K562 (cell line): ENCODE measurements at regions of chr9 and their contacts with region 1.

Region 1: DNA sequence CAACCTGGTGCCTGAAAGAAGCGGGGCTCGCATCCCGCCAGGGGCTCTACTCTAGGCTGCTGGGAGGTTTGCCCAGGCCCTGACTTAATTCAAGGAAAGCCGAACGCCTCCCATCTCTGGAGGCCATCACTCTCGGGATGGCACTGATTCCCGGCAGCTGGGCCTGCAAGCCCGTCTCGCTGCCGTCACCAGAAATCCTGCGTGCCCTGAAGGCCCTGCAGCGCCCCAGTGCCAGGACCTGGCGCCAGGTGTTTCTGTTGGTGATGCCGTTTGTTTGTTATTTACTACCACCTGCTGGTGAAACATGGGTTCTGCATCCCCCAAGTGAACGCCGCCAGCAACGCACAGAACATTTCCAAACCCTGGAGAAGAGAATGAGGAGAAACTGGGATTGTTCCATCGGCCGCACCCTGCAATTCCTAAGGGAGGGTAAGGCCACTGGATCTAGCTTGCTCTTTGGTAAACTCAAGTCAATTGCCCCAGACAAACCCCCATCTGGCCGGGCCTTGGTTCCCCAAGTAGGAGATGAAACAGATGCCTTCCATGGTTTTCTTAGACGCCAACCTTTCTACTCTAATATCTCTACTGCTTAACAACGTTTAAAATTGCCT is 77.9 kb downstream of the AK8 start:
- DNase-seq: peak; percentile 56 to 71 (median 66)
- ATAC-seq: peak; percentile 70
- H3K4me3 ChIP-seq: no peak overlapping the region
- H3K27ac ChIP-seq: no peak overlapping the region
- H3K4me1 ChIP-seq: peaks cover 15 to 29% of the 10 kb centered on the region in 2 experiments
- H3K27me3 ChIP-seq: peaks cover 9 to 34% of the 10 kb centered on the region in 2 experiments; a peak in 4 of 5 replicates
- CTCF ChIP-seq: peak; percentile 88 to 89 (median 88)
- EP300 ChIP-seq: no peak
- POLR2A ChIP-seq: no peak
- RAD21 ChIP-seq: peak; percentile 87 to 93

Region 2: DNA sequence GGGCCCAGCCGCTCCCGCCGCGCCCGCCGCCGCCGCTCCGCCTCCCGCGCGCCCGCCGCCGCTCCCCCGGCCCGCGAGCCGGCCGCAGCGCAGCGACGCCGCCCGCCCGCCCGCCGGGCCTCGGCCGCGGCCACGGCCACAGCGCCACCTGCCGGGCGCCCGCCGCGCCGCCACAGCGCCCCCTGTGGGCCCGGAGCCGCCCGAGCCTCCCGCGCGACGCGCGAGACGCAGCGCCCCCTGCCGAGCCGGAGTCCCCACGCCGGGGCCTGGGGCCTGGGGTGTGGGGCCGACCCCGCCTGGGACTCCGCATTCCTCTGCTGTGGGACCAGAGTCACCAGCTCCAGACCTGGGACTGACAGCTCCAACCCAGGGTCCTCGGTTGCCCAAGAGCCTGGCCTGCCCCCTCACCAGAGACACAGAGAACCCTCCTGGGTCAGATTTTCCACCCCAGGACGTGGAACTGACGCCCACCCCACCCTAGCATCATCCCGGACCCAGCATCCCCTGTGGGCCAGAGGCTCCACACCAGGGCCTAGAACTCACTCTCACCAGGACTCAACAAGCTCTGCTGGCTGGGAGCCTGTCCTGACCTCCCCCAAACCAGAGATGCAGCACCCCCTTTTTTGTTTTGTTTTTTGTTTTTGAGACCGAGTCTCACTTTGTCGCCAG is 1060.0 kb before region 1 on chr9 and contains the start of gene RAPGEF1:
- CTCF ChIA-PET with region 1: no interaction called
- POLR2A ChIA-PET with region 1: no interaction called
- in situ Hi-C with region 1: no loop called
- intact Hi-C with region 1: no loop called
- DNase-seq: peak; percentile 75 to 92 (median 88)
- ATAC-seq: peak; percentile 89
- H3K4me3 ChIP-seq: peak within 1 kb of the TSS; percentile 64
- H3K27ac ChIP-seq: peak within 1 kb of the TSS; percentile 51; the same call in 1 of the 3 replicates
- H3K4me1 ChIP-seq: peaks cover 11 to 31% of the 10 kb centered on the region in 2 experiments; a peak in 4 of 5 replicates
- H3K27me3 ChIP-seq: no peaks in the 10 kb centered on the region
- CTCF ChIP-seq: peak; percentile 62 to 99 (median 98)
- EP300 ChIP-seq: no peak; the same call in 1 of the 2 replicates
- POLR2A ChIP-seq: no peak
- RAD21 ChIP-seq: peak; percentile 57 to 90
- polyA plus RNA-seq, gene RAPGEF1: 0.06 to 0.10 TPM

Region 3: GRCh38 chr9:132411091-132411508 is 389.0 kb before region 1 on chr9:
- CTCF ChIA-PET with region 1: interaction called, 33 read pairs
- POLR2A ChIA-PET with region 1: interaction called, 5 read pairs
- in situ Hi-C with region 1: no loop called
- intact Hi-C with region 1: loop called (anchors 1 kb)
- DNase-seq: peak; percentile 71 to 77 (median 76)
- ATAC-seq: peak; percentile 87
- H3K4me3 ChIP-seq: no peak overlapping the region
- H3K27ac ChIP-seq: no peak overlapping the region
- H3K4me1 ChIP-seq: peaks cover 13 to 17% of the 10 kb centered on the region in 2 experiments; a peak in 4 of 5 replicates
- H3K27me3 ChIP-seq: peaks cover 23 to 31% of the 10 kb centered on the region in 2 experiments
- CTCF ChIP-seq: peak; percentile 85 to 93 (median 86)
- EP300 ChIP-seq: no peak
- POLR2A ChIP-seq: no peak
- RAD21 ChIP-seq: peak; percentile 75 to 86

Region 4: GRCh38 chr9:132507746-132508469 is 292.2 kb before region 1 on chr9:
- CTCF ChIA-PET with region 1: interaction called, 30 read pairs
- POLR2A ChIA-PET with region 1: no interaction called
- in situ Hi-C with region 1: no loop called
- intact Hi-C with region 1: loop called (anchors 1 kb)
- DNase-seq: peak; percentile 79 to 87 (median 82)
- ATAC-seq: peak; percentile 93
- H3K4me3 ChIP-seq: no peak overlapping the region
- H3K27ac ChIP-seq: no peak overlapping the region
- H3K4me1 ChIP-seq: peaks cover 0 to 6% of the 10 kb centered on the region in 2 experiments; a peak in 1 of 5 replicates
- H3K27me3 ChIP-seq: peaks cover 60 to 89% of the 10 kb centered on the region in 2 experiments
- CTCF ChIP-seq: peak; percentile 81 to 88 (median 88)
- EP300 ChIP-seq: no peak
- POLR2A ChIP-seq: no peak
- RAD21 ChIP-seq: peak; percentile 71 to 84

Region 5: GRCh38 chr9:132669698-132670456 is 130.3 kb before region 1 on chr9 and contains the start of gene DDX31:
- CTCF ChIA-PET with region 1: no interaction called
- POLR2A ChIA-PET with region 1: interaction called, 3 read pairs
- in situ Hi-C with region 1: no loop called
- intact Hi-C with region 1: loop called (anchors 10 kb)
- DNase-seq: peak; percentile 84 to 91 (median 88)
- ATAC-seq: peak; percentile 93
- H3K4me3 ChIP-seq: peak within 1 kb of the TSS; percentile 98
- H3K27ac ChIP-seq: peak within 1 kb of the TSS; percentile 99
- H3K4me1 ChIP-seq: peaks cover 3 to 22% of the 10 kb centered on the region in 2 experiments; a peak in 4 of 5 replicates
- H3K27me3 ChIP-seq: no peaks in the 10 kb centered on the region
- CTCF ChIP-seq: no peak
- EP300 ChIP-seq: no peak; the same call in 1 of the 2 replicates
- POLR2A ChIP-seq: peak; percentile 85
- RAD21 ChIP-seq: no peak
- polyA plus RNA-seq, gene DDX31: 11.9 to 18.7 TPM

Region 6: GRCh38 chr9:132679946-132680625 is 120.1 kb before region 1 on chr9:
- CTCF ChIA-PET with region 1: no interaction called
- POLR2A ChIA-PET with region 1: no interaction called
- in situ Hi-C with region 1: no loop called
- intact Hi-C with region 1: no loop called
- DNase-seq: no peak
- ATAC-seq: no peak
- H3K4me3 ChIP-seq: no peak overlapping the region
- H3K27ac ChIP-seq: no peak overlapping the region
- H3K4me1 ChIP-seq: no peaks in the 10 kb centered on the region
- H3K27me3 ChIP-seq: no peaks in the 10 kb centered on the region
- CTCF ChIP-seq: no peak
- EP300 ChIP-seq: no peak
- POLR2A ChIP-seq: no peak
- RAD21 ChIP-seq: no peak

Region 7: GRCh38 chr9:132762896-132763295 is 37.2 kb before region 1 on chr9:
- CTCF ChIA-PET with region 1: no interaction called
- POLR2A ChIA-PET with region 1: interaction called, 3 read pairs
- in situ Hi-C with region 1: no loop called
- intact Hi-C with region 1: loop called (anchors 5 kb)
- DNase-seq: no peak
- ATAC-seq: no peak
- H3K4me3 ChIP-seq: no peak overlapping the region
- H3K27ac ChIP-seq: no peak overlapping the region
- H3K4me1 ChIP-seq: no peaks in the 10 kb centered on the region
- H3K27me3 ChIP-seq: peaks cover 14 to 19% of the 10 kb centered on the region in 2 experiments; a peak in 4 of 5 replicates
- CTCF ChIP-seq: no peak
- EP300 ChIP-seq: no peak
- POLR2A ChIP-seq: no peak
- RAD21 ChIP-seq: no peak

Region 8: GRCh38 chr9:132789719-132790118 is 10.4 kb before region 1 on chr9:
- CTCF ChIA-PET with region 1: no interaction called
- POLR2A ChIA-PET with region 1: no interaction called
- in situ Hi-C with region 1: no loop called
- intact Hi-C with region 1: no loop called
- DNase-seq: no peak
- ATAC-seq: no peak
- H3K4me3 ChIP-seq: no peak overlapping the region
- H3K27ac ChIP-seq: no peak overlapping the region
- H3K4me1 ChIP-seq: peaks cover 3 to 9% of the 10 kb centered on the region in 2 experiments
- H3K27me3 ChIP-seq: peaks cover 5 to 29% of the 10 kb centered on the region in 2 experiments; a peak in 4 of 5 replicates
- CTCF ChIP-seq: no peak
- EP300 ChIP-seq: no peak
- POLR2A ChIP-seq: no peak
- RAD21 ChIP-seq: no peak; a peak in 1 of 4 replicates